ENCODE measurements at regions of chr2 and their contacts with region 1.

Region 1: GRCh38 chr2:134411828-134412638 is 158.2 kb downstream of the MGAT5 start:
- DNase-seq: peak; percentile 55
- ATAC-seq: peak; percentile 97
- H3K4me3 Mint-ChIP-seq: peak overlapping the region; percentile 46
- H3K27ac Mint-ChIP-seq: peak overlapping the region; percentile 86
- H3K4me1 Mint-ChIP-seq: peaks cover 46% of the 10 kb centered on the region
- H3K27me3 Mint-ChIP-seq: no peaks in the 10 kb centered on the region
- CTCF ChIP-seq: no peak

Region 2: DNA sequence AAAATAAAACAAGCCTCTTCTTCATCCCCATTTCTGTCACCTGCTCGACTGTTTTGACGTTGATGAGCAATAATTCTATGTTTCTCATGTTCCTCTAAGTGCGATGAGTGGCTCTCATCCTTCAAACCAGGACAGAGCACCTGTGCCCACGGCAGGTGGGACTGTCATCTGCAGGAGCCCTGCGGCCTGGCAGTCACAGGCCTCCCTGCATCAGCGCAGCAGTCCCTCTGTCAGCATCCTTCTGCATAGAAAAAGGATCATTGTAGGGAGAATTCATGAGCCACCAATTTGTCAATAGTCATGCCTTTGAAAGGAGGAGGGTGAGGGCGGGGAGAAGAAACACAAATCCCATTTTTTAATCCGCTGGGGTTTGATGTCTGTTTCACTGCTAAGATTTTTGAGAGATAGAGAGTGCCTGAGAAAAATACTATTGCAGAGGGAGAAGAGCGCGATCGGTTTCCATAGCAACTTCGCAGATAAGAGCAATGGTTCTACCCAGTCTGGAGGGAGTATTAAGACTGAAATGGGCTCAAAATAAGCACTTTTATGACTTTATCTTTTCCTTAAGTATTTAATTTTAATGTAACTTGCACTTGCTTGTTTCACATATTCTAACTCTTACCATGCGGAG is 609.5 kb before region 1 on chr2:
- CTCF ChIA-PET with region 1: no interaction called
- POLR2A ChIA-PET with region 1: no interaction called
- intact Hi-C with region 1: no loop called
- DNase-seq: no peak
- ATAC-seq: no peak
- H3K4me3 Mint-ChIP-seq: no peak overlapping the region
- H3K27ac Mint-ChIP-seq: no peak overlapping the region
- H3K4me1 Mint-ChIP-seq: no peaks in the 10 kb centered on the region
- H3K27me3 Mint-ChIP-seq: peaks cover 8% of the 10 kb centered on the region
- CTCF ChIP-seq: no peak

Region 3: GRCh38 chr2:133886735-133887660 is 525.0 kb before region 1 on chr2:
- CTCF ChIA-PET with region 1: interaction called, 157 read pairs
- POLR2A ChIA-PET with region 1: interaction called, 3 read pairs
- intact Hi-C with region 1: loop called (anchors 1 kb)
- DNase-seq: peak; percentile 36
- ATAC-seq: peak; percentile 70
- H3K4me3 Mint-ChIP-seq: no peak overlapping the region
- H3K27ac Mint-ChIP-seq: no peak overlapping the region
- H3K4me1 Mint-ChIP-seq: peaks cover 10% of the 10 kb centered on the region
- H3K27me3 Mint-ChIP-seq: peaks cover 7% of the 10 kb centered on the region
- CTCF ChIP-seq: no peak

Region 4: GRCh38 chr2:134039912-134040581 is 372.0 kb before region 1 on chr2:
- CTCF ChIA-PET with region 1: no interaction called
- POLR2A ChIA-PET with region 1: no interaction called
- intact Hi-C with region 1: loop called (anchors 5 kb)
- DNase-seq: no peak
- ATAC-seq: peak; percentile 57
- H3K4me3 Mint-ChIP-seq: peak overlapping the region; percentile 65
- H3K27ac Mint-ChIP-seq: peak overlapping the region; percentile 90
- H3K4me1 Mint-ChIP-seq: peaks cover 66% of the 10 kb centered on the region
- H3K27me3 Mint-ChIP-seq: no peaks in the 10 kb centered on the region
- CTCF ChIP-seq: no peak

Region 5: GRCh38 chr2:134232868-134233727 is 178.9 kb before region 1 on chr2:
- CTCF ChIA-PET with region 1: interaction called, 14 read pairs
- POLR2A ChIA-PET with region 1: no interaction called
- intact Hi-C with region 1: no loop called
- DNase-seq: no peak
- ATAC-seq: peak; percentile 35
- H3K4me3 Mint-ChIP-seq: peak overlapping the region; percentile 52
- H3K27ac Mint-ChIP-seq: peak overlapping the region; percentile 86
- H3K4me1 Mint-ChIP-seq: peaks cover 90% of the 10 kb centered on the region
- H3K27me3 Mint-ChIP-seq: no peaks in the 10 kb centered on the region
- CTCF ChIP-seq: no peak

Region 6: GRCh38 chr2:134261398-134262131 is 150.5 kb before region 1 on chr2:
- CTCF ChIA-PET with region 1: interaction called, 14 read pairs
- POLR2A ChIA-PET with region 1: no interaction called
- intact Hi-C with region 1: no loop called
- DNase-seq: no peak
- ATAC-seq: peak; percentile 66
- H3K4me3 Mint-ChIP-seq: peak overlapping the region; percentile 38
- H3K27ac Mint-ChIP-seq: peak overlapping the region; percentile 97
- H3K4me1 Mint-ChIP-seq: peaks cover 91% of the 10 kb centered on the region
- H3K27me3 Mint-ChIP-seq: no peaks in the 10 kb centered on the region
- CTCF ChIP-seq: no peak

Region 7: DNA sequence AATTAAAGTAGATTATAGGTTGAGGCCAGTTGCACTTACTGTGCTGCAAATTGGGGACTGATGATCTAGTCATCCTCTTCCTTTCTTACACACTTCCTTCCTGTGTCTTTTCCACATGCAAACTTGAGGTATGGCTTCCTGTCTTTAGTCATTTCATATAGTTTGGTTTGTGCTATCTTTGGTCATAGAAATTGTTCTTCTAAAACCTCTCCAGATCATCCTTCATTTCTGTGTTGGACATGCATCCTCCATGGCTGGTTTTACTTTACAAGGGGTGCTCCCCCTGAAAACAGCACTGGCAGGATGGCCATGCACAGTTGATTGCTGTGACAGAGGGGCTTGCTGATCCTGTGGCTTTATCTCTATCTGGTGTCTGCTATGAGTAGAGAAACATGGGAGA is 121.7 kb before region 1 on chr2:
- CTCF ChIA-PET with region 1: interaction called, 10 read pairs
- POLR2A ChIA-PET with region 1: no interaction called
- intact Hi-C with region 1: no loop called
- DNase-seq: no peak
- ATAC-seq: peak; percentile 49
- H3K4me3 Mint-ChIP-seq: no peak overlapping the region
- H3K27ac Mint-ChIP-seq: no peak overlapping the region
- H3K4me1 Mint-ChIP-seq: no peaks in the 10 kb centered on the region
- H3K27me3 Mint-ChIP-seq: no peaks in the 10 kb centered on the region
- CTCF ChIP-seq: no peak

Region 8: GRCh38 chr2:134453476-134453875 is 41.4 kb after region 1 on chr2:
- CTCF ChIA-PET with region 1: interaction called, 16 read pairs
- POLR2A ChIA-PET with region 1: no interaction called
- intact Hi-C with region 1: no loop called
- DNase-seq: no peak
- ATAC-seq: no peak
- H3K4me3 Mint-ChIP-seq: no peak overlapping the region
- H3K27ac Mint-ChIP-seq: no peak overlapping the region
- H3K4me1 Mint-ChIP-seq: no peaks in the 10 kb centered on the region
- H3K27me3 Mint-ChIP-seq: no peaks in the 10 kb centered on the region
- CTCF ChIP-seq: no peak

Measured in activated B cell treated with CpG ODN at 0.5 μM for 24 hours (primary cell).